Psoas muscle (tissue), 8 donors: ENCODE measurements at regions of chrX and their contacts with region 1.

Region 1: DNA sequence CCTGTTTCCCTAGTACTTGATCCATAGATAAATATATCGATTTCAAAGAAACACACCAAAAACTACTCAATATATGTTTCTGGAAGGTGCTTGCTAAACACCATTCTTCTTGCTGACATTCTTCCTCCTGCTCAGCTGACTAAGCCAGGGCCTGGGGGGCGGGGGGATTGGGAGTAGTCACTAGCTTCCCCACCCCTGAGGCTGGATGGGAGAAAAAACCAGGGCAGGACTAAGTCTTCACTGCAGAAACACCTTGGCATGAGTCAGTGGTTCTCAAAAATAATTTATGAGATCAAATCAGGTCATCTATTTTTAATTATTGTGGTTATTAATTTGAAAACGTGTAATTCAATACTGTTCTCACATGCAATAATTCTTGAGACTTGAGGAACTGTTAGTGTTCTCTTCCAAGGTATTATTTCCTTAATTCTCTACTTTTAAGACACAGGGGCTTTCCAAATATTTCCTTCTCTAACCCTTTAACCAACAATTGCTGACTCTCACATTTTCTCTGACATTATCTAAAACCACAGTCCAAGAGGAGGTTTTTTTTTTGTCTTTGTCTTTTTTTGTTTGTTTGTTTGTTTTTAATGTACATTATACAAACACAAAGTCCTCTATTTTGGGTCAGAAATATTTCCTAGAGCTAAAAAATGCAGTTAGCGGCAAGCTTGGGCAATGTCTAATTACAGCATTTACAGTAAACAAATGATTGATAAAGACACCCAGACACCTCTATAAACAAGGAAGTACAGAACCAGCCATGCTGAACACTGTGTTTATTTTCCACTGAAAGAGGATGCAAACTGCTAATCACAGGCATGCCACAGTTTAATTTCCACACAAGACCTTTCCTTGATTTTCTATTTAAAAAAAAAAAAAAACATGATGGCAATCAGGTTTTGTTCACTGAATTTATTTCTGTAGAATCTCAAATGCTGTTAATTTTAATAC is 120.3 kb upstream of the USP9X start:
- DNase-seq: no peak
- ATAC-seq: peak; percentile 21 to 77 (median 60)
- H3K4me3 ChIP-seq: no peak overlapping the region
- H3K27ac ChIP-seq: no peak overlapping the region
- H3K4me1 ChIP-seq: no peaks in the 10 kb centered on the region
- H3K27me3 ChIP-seq: no peaks in the 10 kb centered on the region
- CTCF ChIP-seq: no peak

Region 2: DNA sequence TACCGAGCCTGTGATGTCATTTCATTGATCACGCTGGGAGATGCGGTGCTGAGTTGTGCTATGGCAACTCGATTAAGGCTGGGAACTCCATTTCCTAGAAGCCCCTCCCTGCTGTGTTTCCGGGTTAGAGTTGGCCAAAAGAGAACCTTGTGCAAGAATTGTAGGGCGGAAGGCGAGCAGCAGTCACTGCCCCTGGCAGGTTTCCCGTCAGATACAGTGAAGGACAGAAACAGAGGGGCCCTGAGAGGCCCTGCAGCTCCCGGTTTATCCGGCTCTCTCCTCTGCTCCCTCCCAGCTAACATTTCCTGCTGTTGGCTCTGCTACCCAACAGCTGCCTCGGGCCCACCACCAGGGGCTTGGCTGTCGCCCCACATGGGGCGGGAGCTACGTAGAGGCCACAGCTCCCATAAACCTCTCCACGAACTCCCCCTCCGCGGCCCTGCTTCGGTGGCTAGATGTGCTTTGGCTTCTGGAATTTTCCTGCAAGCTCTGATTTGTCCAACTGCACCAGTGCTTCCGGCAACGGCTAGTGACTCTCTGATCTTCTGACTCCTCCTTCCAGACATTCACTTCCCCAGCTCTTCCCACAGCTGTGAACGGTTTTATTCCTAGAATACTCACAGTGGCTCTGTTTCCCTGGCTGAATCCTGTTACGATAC is 45.4 kb after region 1 on chrX:
- intact Hi-C with region 1: loop called in 1 of 2 experiments (anchors 1 kb)
- DNase-seq: peak; percentile 73 to 83
- ATAC-seq: peak; percentile 86 to 92 (median 90)
- H3K4me3 ChIP-seq: peak overlapping the region; percentile 53
- H3K27ac ChIP-seq: peak overlapping the region; percentile 83
- H3K4me1 ChIP-seq: peaks cover 6% of the 10 kb centered on the region
- H3K27me3 ChIP-seq: peaks cover 0 to 26% (median 0%) of the 10 kb centered on the region in 3 donors
- CTCF ChIP-seq: peak; percentile 24

Region 3: DNA sequence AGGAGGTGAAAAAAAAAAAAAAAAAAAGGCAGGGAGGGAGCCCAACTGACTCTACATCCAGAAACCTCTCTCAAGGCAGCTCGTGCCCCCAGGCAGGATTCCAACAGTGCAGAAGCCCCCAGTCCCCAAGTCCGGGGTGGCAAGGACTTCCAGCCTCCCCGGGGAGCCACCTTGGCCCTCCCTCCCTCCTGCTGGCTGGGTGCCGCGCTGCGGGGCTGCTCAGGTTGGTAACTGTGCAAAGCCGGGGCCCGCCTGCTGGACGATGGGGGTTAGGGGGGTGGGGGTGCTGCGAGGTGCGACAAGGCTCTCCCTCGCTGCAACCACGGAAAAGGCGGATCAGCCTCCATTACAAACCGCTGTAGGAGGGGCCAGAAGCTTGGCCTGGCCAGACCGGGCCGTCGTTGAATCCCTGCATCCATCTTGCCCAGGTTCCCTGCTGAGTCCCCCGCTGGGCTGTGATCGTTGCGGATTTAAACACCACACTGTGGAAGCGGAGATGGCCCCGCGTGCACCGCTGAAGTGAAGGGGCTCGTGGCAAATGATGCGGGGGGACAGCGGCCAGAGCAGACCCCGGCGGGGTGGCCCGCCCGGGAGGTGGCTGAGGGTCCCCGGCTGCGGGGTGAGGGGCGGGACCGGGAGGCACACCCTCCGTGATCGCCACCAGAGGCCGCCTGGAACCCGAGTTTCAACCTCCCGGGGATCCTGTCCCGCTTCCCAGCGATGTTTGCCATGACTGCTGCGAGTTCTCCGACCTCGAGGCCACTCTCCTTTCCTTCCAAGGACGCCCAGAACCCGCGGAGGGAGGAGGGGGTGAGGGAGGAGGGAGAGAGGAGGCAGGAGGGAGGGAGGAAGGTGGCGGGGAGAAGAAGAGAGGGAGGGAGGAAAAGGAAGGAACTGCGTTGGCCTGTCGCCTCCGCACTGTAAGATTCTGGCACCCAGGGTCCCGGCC is 311.0 kb after region 1 on chrX:
- intact Hi-C with region 1: no loop called
- DNase-seq: peak; percentile 67 to 85
- ATAC-seq: peak; percentile 77 to 96 (median 88)
- H3K4me3 ChIP-seq: peak overlapping the region; percentile 66
- H3K27ac ChIP-seq: no peak overlapping the region
- H3K4me1 ChIP-seq: no peaks in the 10 kb centered on the region
- H3K27me3 ChIP-seq: peaks cover 0 to 18% (median 0%) of the 10 kb centered on the region in 3 donors
- CTCF ChIP-seq: peak; percentile 57